CD8-positive, alpha-beta T cell (primary cell): ENCODE measurements at regions of chr19 and their contacts with region 1.

Region 1: DNA sequence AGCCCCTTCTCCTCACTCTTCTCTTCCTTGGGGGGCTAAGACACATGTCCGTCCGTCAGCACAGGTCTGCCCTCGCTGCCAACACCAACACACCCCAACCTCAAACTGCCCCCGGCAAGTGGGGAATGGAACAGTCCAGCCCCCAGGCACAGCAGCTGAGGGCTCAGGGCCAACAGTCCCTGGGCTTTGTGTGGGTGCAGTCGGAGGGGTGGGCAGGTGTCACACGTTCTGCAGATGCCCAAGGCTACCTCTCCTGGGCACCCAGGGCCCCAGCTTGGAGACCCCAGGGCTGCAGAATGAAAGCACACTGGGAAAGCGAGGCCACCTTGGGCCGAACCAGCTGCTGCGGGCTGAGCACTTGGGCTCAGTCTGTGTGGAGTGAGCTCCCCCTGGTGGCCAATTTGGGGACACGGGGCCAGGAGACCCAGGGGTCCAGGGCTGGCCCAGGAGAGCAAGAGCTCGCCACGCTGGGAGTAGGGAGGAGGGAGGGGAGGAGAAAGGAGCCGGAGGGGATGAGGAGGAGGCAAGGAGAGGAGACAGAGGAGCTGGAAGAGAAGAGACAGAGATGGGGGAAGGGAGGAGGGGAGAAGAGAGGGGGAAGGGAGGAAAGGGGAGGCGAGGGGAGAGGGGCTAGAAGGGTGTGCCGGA is 14.0 kb upstream of the ATP8B3 start:
- DNase-seq: peak; percentile 66 to 86 (median 81)
- ATAC-seq: peak; percentile 87
- H3K4me3 ChIP-seq: no peak overlapping the region
- H3K4me3 Mint-ChIP-seq: no peak overlapping the region
- H3K27ac ChIP-seq: no peak overlapping the region
- H3K27ac Mint-ChIP-seq: no peak overlapping the region
- H3K4me1 ChIP-seq: peaks cover 3% of the 10 kb centered on the region
- H3K4me1 Mint-ChIP-seq: peaks cover 4% of the 10 kb centered on the region
- H3K27me3 ChIP-seq: no peaks in the 10 kb centered on the region
- H3K27me3 Mint-ChIP-seq: no peaks in the 10 kb centered on the region
- CTCF ChIP-seq: peak; percentile 76

Region 2: GRCh38 chr19:1540365-1540925 is 285.6 kb before region 1 on chr19:
- CTCF ChIA-PET with region 1: interaction called, 15 read pairs
- POLR2A ChIA-PET with region 1: no interaction called
- intact Hi-C with region 1: no loop called
- DNase-seq: no peak
- ATAC-seq: no peak
- H3K4me3 ChIP-seq: no peak overlapping the region
- H3K4me3 Mint-ChIP-seq: no peak overlapping the region
- H3K27ac ChIP-seq: no peak overlapping the region
- H3K27ac Mint-ChIP-seq: no peak overlapping the region
- H3K4me1 ChIP-seq: no peaks in the 10 kb centered on the region
- H3K4me1 Mint-ChIP-seq: no peaks in the 10 kb centered on the region
- H3K27me3 ChIP-seq: peaks cover under 1 to 7% of the 10 kb centered on the region in 2 experiments
- H3K27me3 Mint-ChIP-seq: peaks cover 25% of the 10 kb centered on the region
- CTCF ChIP-seq: no peak

Region 3: GRCh38 chr19:1672038-1672768 is 153.8 kb before region 1 on chr19:
- CTCF ChIA-PET with region 1: interaction called, 9 read pairs
- POLR2A ChIA-PET with region 1: no interaction called
- intact Hi-C with region 1: loop called (anchors 1 kb)
- DNase-seq: peak in 8 of 9 experiments; percentile 46 to 78 (median 66)
- ATAC-seq: peak; percentile 66
- H3K4me3 ChIP-seq: peak overlapping the region; percentile 20 to 30
- H3K4me3 Mint-ChIP-seq: no peak overlapping the region
- H3K27ac ChIP-seq: no peak overlapping the region
- H3K27ac Mint-ChIP-seq: no peak overlapping the region
- H3K4me1 ChIP-seq: peaks cover 19% of the 10 kb centered on the region
- H3K4me1 Mint-ChIP-seq: peaks cover 16% of the 10 kb centered on the region
- H3K27me3 ChIP-seq: peaks cover 22 to 50% of the 10 kb centered on the region in 2 experiments
- H3K27me3 Mint-ChIP-seq: peaks cover 48% of the 10 kb centered on the region
- CTCF ChIP-seq: peak; percentile 94

Region 4: DNA sequence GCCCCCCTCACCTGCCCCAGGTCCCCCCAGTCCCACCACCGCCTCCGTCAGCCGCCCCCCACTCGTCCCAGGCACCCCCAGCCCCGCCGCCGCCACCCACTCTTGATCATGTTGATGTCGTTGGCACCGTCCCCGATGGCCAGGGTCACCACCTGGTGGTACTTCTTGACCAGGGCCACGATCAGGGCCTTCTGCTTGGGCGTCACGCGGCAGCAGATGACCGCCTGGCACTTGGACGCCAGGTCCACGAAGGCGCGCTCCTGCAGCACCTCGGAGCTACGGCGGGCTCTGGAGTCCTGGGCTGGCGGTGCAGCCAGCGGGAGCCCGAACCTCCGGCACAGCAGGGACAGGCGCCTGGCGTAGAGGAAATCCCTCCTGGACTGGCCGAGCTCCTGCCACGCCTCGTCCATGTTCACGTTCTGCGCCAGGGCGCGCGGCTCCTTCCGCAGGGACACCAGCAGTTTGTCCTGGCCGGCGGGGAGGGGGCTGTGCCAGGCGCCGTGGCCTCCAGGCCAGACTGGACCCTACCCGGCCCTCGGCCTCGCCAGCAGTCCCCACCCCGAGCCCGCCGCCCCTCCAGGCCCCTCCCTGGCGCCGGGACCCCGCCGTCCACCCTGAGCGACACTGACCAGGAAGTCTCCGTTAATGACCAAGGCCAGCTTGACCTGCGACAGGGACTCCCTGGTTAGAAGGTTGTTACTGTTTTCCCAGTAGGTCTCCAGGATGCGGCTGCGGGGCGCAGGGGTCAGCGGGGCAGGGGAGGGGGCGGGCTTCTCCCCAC is 36.6 kb before region 1 on chr19:
- CTCF ChIA-PET with region 1: interaction called, 14 read pairs
- POLR2A ChIA-PET with region 1: no interaction called
- intact Hi-C with region 1: loop called (anchors 1 to 2 kb)
- DNase-seq: no peak
- ATAC-seq: no peak
- H3K4me3 ChIP-seq: no peak overlapping the region
- H3K4me3 Mint-ChIP-seq: no peak overlapping the region
- H3K27ac ChIP-seq: no peak overlapping the region
- H3K27ac Mint-ChIP-seq: no peak overlapping the region
- H3K4me1 ChIP-seq: no peaks in the 10 kb centered on the region
- H3K4me1 Mint-ChIP-seq: no peaks in the 10 kb centered on the region
- H3K27me3 ChIP-seq: peaks cover 0 to 5% of the 10 kb centered on the region in 2 experiments
- H3K27me3 Mint-ChIP-seq: peaks cover 10% of the 10 kb centered on the region
- CTCF ChIP-seq: no peak

Region 5: DNA sequence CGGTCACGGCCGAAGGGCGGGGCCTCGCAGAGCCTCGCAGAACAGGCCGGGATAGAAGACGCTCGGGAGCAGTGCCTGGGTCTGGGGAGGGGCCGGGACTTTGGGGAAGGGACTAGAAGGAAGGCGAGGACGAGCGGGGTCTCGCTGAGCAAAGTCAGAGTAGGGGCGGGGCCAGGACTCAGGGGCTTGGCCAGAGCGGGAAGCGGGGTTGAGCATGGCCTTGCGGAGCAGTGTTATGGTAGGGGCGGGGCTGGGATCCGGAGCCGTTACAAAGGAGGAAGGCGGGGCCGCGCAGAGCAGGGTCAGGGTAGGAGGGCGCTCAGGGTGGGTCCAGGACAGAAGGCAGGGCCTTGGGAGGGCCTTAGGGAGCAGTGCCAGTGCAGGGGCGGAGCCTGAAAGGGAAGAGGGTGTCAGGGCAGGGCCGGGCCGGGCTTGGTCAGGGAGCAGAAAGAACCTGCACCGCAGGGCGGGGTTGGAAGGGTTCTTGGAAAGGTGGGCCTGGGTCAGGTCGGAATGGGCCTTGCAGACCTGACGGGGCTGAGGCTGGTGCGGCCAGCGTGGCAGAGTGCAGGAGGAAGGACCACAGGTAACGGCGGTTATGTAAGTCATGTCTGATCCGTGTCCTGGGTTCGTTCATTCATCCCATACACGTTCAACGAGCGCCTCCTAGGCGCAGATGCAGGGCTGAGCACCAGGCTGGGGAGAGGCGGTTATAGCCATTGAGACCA is 13.4 kb before region 1 on chr19:
- CTCF ChIA-PET with region 1: interaction called, 16 read pairs
- POLR2A ChIA-PET with region 1: no interaction called
- intact Hi-C with region 1: no loop called
- DNase-seq: peak; percentile 62 to 91 (median 81)
- ATAC-seq: peak; percentile 76
- H3K4me3 ChIP-seq: peak overlapping the region; percentile 72 to 77
- H3K4me3 Mint-ChIP-seq: peak overlapping the region; percentile 91
- H3K27ac ChIP-seq: peak overlapping the region; percentile 34 to 45
- H3K27ac Mint-ChIP-seq: peak overlapping the region; percentile 87
- H3K4me1 ChIP-seq: peaks cover 12% of the 10 kb centered on the region
- H3K4me1 Mint-ChIP-seq: peaks cover 13% of the 10 kb centered on the region
- H3K27me3 ChIP-seq: no peaks in the 10 kb centered on the region
- H3K27me3 Mint-ChIP-seq: no peaks in the 10 kb centered on the region
- CTCF ChIP-seq: peak; percentile 65

Region 6: DNA sequence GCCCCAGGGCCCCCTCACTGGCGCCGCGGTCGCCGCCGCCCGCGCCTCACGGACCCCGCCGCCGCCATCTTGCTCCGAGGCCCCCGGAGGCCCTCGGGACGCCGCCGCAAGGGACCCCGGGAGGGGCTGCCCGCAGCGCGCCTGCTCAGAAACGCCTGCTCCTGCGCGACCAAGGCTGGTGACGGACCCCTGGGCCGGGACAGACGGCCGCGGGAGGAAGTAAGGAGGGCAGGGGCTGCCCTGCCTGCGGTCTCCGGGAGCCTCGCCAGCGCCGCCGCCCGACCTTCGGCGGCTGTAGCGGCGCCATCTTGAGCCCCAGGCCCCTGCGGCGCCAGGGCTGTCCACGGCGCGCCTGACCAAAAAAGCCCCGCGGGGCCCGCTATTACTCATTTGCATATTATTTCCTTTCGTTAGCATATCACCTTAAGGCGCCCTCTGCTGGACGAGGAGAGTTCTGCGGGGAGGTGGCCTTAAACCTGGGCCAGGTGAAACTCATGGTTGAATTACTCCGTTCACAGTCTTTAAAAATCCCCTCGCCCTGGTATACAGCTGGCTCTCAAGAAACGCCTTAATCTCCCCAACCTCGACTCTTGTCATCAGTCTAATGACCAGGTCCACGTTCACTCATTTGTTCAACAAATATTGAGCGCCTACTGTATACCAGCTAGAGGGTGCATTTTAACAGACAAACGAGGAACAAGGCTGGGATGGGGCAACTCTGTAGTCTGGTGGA is 22.5 kb after region 1 on chr19 and contains the start of gene REXO1:
- CTCF ChIA-PET with region 1: interaction called, 17 read pairs
- POLR2A ChIA-PET with region 1: no interaction called
- intact Hi-C with region 1: no loop called
- DNase-seq: peak; percentile 96 to 99 (median 97)
- ATAC-seq: peak; percentile 76
- H3K4me3 ChIP-seq: peak within 1 kb of the TSS; percentile 86 to 90
- H3K4me3 Mint-ChIP-seq: peak within 1 kb of the TSS; percentile 88
- H3K27ac ChIP-seq: peak within 1 kb of the TSS; percentile 93 to 97
- H3K27ac Mint-ChIP-seq: peak within 1 kb of the TSS; percentile 93
- H3K4me1 ChIP-seq: peaks cover 72% of the 10 kb centered on the region
- H3K4me1 Mint-ChIP-seq: peaks cover 56% of the 10 kb centered on the region
- H3K27me3 ChIP-seq: no peaks in the 10 kb centered on the region
- H3K27me3 Mint-ChIP-seq: no peaks in the 10 kb centered on the region
- CTCF ChIP-seq: peak; percentile 91
- total RNA-seq, gene REXO1: 143 to 152 TPM

Region 7: DNA sequence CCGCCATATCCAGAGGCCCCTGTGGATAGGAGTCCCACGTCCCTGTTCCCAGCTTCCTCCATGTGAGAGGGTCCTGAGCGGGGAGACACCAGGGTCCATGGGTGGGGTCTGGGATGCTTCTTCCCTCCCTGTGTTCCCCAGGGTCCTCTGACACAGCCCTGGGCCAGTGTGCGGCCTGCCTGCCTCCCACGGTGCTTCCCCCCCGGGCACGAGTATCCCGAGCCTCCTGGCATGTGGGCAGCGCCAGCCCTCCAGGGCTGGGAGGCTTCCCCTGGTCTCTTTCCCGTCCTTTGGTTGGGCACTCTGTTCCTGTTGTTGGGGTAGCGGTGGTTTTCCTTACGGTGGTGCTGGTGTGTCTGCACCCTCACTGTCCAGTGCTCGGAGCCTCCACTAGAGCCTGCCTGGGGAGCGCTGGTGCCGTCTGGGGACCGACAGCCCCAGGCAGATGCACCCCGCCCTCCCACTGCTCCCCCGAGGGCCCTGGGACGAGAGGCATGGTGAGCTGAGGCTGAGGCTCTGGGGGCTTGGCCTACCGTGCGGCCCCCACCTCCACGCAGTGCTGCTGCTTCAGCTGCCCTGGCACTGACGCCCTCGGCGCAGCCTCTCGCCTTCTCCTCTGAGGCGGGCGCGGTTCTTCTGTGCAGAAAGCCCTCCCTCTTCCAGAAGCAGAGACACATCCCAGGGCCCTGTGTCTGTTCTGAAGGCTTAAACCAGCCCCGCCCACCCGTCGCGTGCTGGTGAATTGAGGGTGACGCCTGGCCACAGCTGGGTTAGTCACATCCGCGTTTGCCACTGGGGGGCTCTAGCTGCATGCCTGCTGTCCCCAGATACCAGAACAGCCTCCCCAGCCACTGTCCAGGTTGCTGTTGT is 382.2 kb after region 1 on chr19:
- CTCF ChIA-PET with region 1: no interaction called
- POLR2A ChIA-PET with region 1: no interaction called
- intact Hi-C with region 1: no loop called
- DNase-seq: peak in 5 of 9 experiments; percentile 19 to 57 (median 46)
- ATAC-seq: peak; percentile 51
- H3K4me3 ChIP-seq: no peak overlapping the region
- H3K4me3 Mint-ChIP-seq: no peak overlapping the region
- H3K27ac ChIP-seq: no peak overlapping the region
- H3K27ac Mint-ChIP-seq: no peak overlapping the region
- H3K4me1 ChIP-seq: no peaks in the 10 kb centered on the region
- H3K4me1 Mint-ChIP-seq: no peaks in the 10 kb centered on the region
- H3K27me3 ChIP-seq: no peaks in the 10 kb centered on the region
- H3K27me3 Mint-ChIP-seq: no peaks in the 10 kb centered on the region
- CTCF ChIP-seq: no peak